MCF 10A (cell line): ENCODE measurements at regions of chr16 and their contacts with region 1.

Region 1: DNA sequence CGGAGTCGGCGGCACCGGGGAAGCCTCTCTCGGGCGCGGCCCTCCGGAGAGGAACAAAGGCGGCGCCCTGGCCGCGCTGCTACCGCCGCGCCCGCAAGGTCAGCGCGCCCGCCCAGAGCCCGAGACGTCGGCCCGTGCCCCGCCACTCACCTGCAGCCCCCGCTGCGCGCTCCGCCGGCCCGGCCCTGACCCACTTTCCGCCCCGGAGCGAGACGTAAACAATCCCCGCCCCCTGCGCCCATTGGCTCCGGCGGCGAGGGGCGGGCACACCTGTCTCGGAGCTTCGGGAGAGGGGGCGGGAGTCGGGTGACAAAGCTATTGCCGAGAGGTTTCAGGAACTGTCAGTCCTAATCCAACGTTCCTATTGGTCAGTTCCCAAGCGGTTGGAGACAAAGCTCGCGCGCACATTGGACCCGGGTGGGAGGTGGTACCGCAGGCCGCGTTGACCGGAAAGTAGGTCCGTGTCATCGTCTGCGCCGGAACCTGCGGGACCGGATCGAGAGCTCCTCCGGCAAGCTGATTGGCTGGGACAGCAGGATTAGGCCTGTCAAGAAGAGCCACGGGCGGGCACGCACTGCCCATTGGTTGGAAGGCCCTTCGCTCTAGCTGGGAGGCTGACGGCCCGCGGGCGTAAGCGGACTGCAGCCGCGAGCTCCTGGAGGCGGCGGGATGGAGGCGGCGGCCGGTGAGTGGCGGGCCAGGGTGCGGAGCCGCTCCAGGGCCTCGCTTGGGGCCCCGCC is at the starts of genes NUBP2 and SPSB3:
- DNase-seq: peak; percentile 100
- H3K4me3 Mint-ChIP-seq: peak within 1 kb of the TSS; percentile 88
- H3K27ac Mint-ChIP-seq: peak within 1 kb of the TSS; percentile 78
- H3K4me1 Mint-ChIP-seq: peaks cover 9% of the 10 kb centered on the region
- H3K27me3 Mint-ChIP-seq: no peaks in the 10 kb centered on the region
- CTCF ChIP-seq: no peak
- total RNA-seq, gene NUBP2: 71.3 and 73.9 TPM in 2 replicates
- total RNA-seq, gene SPSB3: 21.6 and 22.2 TPM in 2 replicates

Region 2: DNA sequence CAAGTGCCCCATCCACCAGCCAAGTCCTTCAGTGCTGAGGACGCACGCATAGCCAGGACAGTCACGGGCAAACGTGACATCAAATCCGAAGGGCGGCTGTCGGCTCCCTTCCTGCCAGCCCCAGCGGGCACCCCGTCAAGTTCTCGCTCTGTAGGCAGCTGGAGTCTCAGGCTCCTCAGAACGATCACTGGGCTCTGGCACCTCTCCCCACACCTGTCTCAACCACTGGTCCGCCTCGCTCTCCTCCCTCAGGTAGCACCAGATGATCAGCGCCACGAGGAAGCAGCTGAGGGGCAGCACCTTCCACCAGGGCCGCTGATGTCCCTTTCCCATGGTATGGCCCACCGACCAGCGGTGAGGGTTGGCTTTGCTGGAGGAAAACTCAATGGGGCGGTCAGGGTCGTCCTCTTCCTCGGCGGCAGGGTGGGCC is 362.4 kb before region 1 on chr16:
- CTCF ChIA-PET with region 1: no interaction called
- POLR2A ChIA-PET with region 1: interaction called, 13 read pairs
- intact Hi-C with region 1: no loop called
- DNase-seq: no peak
- H3K4me3 Mint-ChIP-seq: peak overlapping the region; percentile 86
- H3K27ac Mint-ChIP-seq: peak overlapping the region; percentile 95
- H3K4me1 Mint-ChIP-seq: no peaks in the 10 kb centered on the region
- H3K27me3 Mint-ChIP-seq: no peaks in the 10 kb centered on the region
- CTCF ChIP-seq: no peak

Region 3: GRCh38 chr16:1691276-1691675 is 91.2 kb before region 1 on chr16:
- CTCF ChIA-PET with region 1: no interaction called
- POLR2A ChIA-PET with region 1: interaction called, 17 read pairs
- intact Hi-C with region 1: no loop called
- DNase-seq: peak; percentile 48
- H3K4me3 Mint-ChIP-seq: peak overlapping the region; percentile 62
- H3K27ac Mint-ChIP-seq: peak overlapping the region; percentile 97
- H3K4me1 Mint-ChIP-seq: peaks cover 51% of the 10 kb centered on the region
- H3K27me3 Mint-ChIP-seq: no peaks in the 10 kb centered on the region
- CTCF ChIP-seq: peak; percentile 33

Region 4: GRCh38 chr16:1745181-1745899 is 37.2 kb before region 1 on chr16:
- CTCF ChIA-PET with region 1: interaction called, 3 read pairs
- POLR2A ChIA-PET with region 1: interaction called, 26 read pairs
- intact Hi-C with region 1: no loop called
- DNase-seq: peak; percentile 88
- H3K4me3 Mint-ChIP-seq: peak overlapping the region; percentile 17
- H3K27ac Mint-ChIP-seq: peak overlapping the region; percentile 89
- H3K4me1 Mint-ChIP-seq: peaks cover 34% of the 10 kb centered on the region
- H3K27me3 Mint-ChIP-seq: no peaks in the 10 kb centered on the region
- CTCF ChIP-seq: no peak

Region 5: DNA sequence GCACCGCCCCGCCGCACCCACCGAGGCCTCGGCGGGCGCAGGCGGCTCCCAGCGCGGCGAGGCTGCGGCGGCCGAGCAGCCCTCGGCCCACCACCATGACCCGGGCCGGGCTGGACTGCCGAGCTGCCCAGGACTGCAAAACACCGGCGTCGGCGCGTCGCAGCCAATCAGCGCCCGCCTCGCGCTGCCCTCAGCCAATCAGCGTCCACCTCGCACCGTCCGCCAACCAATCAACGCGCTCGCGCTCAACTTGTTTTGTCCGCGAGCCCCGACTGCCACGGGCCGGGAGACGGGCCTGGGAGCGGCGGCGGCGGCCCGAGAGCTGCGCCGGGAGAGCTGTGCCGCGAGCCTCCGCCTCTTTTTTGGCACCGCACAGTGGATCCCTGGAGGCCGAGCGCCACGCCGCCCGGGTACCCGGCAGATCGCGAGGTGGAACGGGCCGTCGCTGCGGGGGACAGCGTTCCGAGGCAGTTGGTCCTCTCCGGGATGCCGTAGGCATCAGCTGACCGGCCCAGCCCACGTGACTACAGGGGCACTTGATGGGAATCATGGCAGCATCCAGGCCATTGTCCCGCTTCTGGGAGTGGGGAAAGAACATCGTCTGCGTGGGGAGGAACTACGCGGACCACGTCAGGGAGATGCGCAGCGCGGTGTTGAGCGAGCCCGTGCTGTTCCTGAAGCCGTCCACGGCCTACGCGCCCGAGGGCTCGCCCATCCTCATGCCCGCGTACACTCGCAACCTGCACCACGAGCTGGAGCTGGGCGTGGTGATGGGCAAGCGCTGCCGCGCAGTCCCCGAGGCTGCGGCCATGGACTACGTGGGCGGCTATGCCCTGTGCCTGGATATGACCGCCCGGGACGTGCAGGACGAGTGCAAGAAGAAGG is 44.4 kb after region 1 on chr16 and contains the starts of genes FAHD1 and HAGH:
- CTCF ChIA-PET with region 1: no interaction called
- POLR2A ChIA-PET with region 1: interaction called, 58 read pairs
- intact Hi-C with region 1: no loop called
- DNase-seq: peak; percentile 89
- H3K4me3 Mint-ChIP-seq: peak within 1 kb of the TSS; percentile 94
- H3K27ac Mint-ChIP-seq: peak within 1 kb of the TSS; percentile 92
- H3K4me1 Mint-ChIP-seq: peaks cover 7% of the 10 kb centered on the region
- H3K27me3 Mint-ChIP-seq: no peaks in the 10 kb centered on the region
- CTCF ChIP-seq: no peak
- total RNA-seq, gene FAHD1: 18.4 and 21.4 TPM in 2 replicates
- total RNA-seq, gene HAGH: 44.5 and 69.8 TPM in 2 replicates